Posterior vena cava (tissue), 2 donors: ENCODE measurements at regions of chr15 and their contacts with region 1.

Region 1: GRCh38 chr15:63093486-63094205 is 28.0 kb upstream of the LACTB start:
- DNase-seq: peak; percentile 90

Region 2: GRCh38 chr15:62782039-62782791 is 311.4 kb before region 1 on chr15:
- intact Hi-C with region 1: loop called (anchors 1 to 5 kb)
- DNase-seq: no peak

Region 3: DNA sequence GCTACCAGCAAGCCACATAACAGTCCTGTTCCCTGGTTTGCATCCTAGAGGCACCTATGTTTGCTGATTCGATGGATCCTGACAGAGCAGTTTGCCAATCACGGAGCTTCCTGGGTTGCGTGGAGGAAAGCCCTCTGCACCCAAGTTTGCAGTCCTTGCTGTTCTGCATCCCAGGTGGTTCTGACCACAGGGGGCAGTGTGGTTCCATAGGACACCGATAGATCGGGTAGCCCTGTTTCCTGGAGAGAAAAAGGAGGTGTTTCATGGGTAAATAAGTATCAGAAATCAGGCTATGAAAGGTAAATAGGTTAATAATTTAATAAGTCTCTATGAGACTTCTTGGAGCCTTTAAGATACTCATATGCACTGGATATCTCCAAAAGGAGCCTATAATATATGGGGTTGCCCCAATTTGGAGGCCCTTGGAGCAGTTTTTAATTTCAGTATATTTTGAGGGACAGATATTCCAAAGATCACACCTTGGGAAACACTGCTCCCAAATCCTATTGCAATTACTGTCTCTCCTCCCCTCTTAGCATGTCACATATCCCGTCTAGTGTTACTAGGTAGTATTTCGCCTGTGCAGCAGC is 245.7 kb before region 1 on chr15:
- intact Hi-C with region 1: loop called in 1 of 2 experiments (anchors 5 kb)
- DNase-seq: peak; percentile 89